Activated CD4-positive, alpha-beta memory T cell treated with anti-CD3 and anti-CD28 coated beads for 36 hours (primary cell): ENCODE measurements at regions of chr3 and their contacts with region 1.

Region 1: GRCh38 chr3:45055411-45056143 is 29.5 kb downstream of the CLEC3B start:
- DNase-seq: no peak
- H3K4me3 Mint-ChIP-seq: no peak overlapping the region
- H3K27ac Mint-ChIP-seq: no peak overlapping the region
- H3K4me1 Mint-ChIP-seq: peaks cover 18% of the 10 kb centered on the region
- H3K27me3 Mint-ChIP-seq: peaks cover 4% of the 10 kb centered on the region

Region 2: DNA sequence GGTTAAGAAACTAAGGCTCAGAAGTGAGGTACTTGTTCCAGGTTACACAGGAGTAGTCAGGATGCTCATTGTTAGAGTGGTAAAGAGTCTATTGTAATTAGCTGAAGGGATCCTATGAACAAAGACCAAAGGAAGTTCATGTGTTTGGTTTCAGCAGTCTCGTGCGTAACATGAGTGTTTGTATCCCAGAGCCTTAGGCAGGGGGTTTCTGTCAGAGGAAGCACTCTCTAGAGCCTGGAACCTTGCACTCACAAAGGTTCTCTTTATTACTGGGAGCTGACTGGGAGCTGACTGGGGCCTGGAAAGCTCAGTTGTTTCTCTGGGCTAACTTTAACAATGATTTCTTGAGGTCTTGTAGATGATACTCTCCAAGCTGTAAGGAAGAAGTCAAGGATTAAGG is 426.9 kb before region 1 on chr3:
- CTCF ChIA-PET with region 1: no interaction called
- POLR2A ChIA-PET with region 1: no interaction called
- intact Hi-C with region 1: no loop called
- DNase-seq: no peak
- H3K4me3 Mint-ChIP-seq: no peak overlapping the region
- H3K27ac Mint-ChIP-seq: no peak overlapping the region
- H3K4me1 Mint-ChIP-seq: peaks cover 20% of the 10 kb centered on the region
- H3K27me3 Mint-ChIP-seq: no peaks in the 10 kb centered on the region

Region 3: GRCh38 chr3:45167011-45167911 is 111.7 kb after region 1 on chr3:
- CTCF ChIA-PET with region 1: no interaction called
- POLR2A ChIA-PET with region 1: no interaction called
- intact Hi-C with region 1: loop called (anchors 5 kb)
- DNase-seq: peak; percentile 95
- H3K4me3 Mint-ChIP-seq: peak overlapping the region; percentile 58
- H3K27ac Mint-ChIP-seq: peak overlapping the region; percentile 88
- H3K4me1 Mint-ChIP-seq: peaks cover 24% of the 10 kb centered on the region
- H3K27me3 Mint-ChIP-seq: no peaks in the 10 kb centered on the region